Activated CD4-positive, alpha-beta T cell treated with anti-CD3 and anti-CD28 coated beads, Interleukin-2, amount 10 ng/mL, durations not matched to agents 24 days and 14 days (primary cell): ENCODE measurements at regions of chr5 and their contacts with region 1.

Region 1: DNA sequence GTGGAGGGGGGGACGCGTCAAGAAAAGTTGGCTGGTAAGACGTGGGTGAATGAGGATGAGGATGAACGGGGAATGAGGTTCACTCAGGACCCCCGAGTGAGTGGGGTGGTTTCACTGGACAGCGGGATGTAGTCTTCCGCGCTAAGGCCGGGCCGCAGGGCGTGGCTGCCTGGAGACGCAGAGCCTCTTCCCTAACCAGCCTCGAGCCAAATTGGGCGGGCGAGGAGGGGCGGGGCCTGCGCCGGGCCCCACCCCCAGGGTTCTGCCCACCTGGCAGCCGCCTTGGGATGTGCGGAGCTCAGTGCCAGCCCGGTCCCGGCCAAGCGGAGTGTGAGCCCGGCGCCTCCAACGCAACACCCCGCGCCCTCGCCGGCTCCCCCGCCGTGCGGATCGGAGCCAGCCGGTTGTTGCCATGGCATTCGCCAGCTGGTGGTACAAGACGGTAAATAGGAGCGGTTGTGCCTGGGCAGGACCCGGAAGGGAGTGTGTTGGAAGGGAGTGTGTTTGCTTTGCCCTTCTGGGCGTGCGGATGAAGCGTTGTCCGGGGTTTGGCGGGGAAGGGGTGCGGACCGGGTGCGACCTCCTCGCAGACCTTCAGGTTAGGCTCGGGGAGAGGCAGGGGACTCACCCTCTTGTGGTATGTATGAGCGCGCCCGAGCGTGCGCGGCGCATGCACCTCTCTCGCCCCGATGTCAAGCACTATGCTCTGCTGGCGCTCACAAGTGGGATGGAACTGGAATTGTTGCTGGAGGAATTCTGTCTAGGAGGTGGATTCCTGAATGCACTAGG is 743 bp downstream of the CAST start:
- DNase-seq: peak; percentile 96
- H3K4me3 Mint-ChIP-seq: peak overlapping the region; percentile 99
- H3K27ac Mint-ChIP-seq: peak overlapping the region; percentile 99
- H3K4me1 Mint-ChIP-seq: peaks cover 49% of the 10 kb centered on the region
- H3K27me3 Mint-ChIP-seq: peaks cover 12% of the 10 kb centered on the region

Region 2: GRCh38 chr5:96584712-96585111 is 78.2 kb before region 1 on chr5:
- intact Hi-C with region 1: no loop called
- DNase-seq: no peak
- H3K4me3 Mint-ChIP-seq: no peak overlapping the region
- H3K27ac Mint-ChIP-seq: no peak overlapping the region
- H3K4me1 Mint-ChIP-seq: peaks cover 4% of the 10 kb centered on the region
- H3K27me3 Mint-ChIP-seq: peaks cover 33% of the 10 kb centered on the region

Region 3: GRCh38 chr5:96702503-96703383 is 39.8 kb after region 1 on chr5:
- intact Hi-C with region 1: loop called (anchors 1 kb)
- DNase-seq: peak; percentile 92
- H3K4me3 Mint-ChIP-seq: peak overlapping the region; percentile 93
- H3K27ac Mint-ChIP-seq: peak overlapping the region; percentile 88
- H3K4me1 Mint-ChIP-seq: peaks cover 30% of the 10 kb centered on the region
- H3K27me3 Mint-ChIP-seq: no peaks in the 10 kb centered on the region

Region 4: DNA sequence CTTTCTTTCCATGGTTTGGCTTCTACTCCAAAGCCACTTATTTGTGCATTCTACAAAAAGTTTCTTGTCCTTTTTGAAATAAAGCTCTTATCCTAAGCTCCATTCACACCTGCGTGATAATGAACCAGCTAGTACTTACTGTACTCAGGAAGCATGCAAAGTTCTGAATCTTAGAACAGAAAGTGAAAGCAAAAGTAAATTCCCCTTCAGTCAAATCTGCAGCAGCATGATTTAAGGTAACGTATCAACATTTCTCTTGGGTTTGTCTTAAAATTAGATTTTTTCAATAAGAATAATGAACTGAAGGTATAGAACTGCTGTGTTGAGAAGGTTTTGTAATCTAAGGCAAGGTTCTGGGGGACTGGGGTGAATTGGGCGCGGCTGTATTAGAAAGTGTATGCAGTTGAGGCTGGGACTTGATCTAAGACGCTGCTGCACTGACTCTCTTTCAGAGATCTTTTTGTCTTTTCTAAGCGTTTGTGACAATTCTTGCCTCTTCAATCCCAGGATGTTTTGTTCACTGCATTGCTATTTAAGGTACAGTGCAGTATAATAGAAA is 213.5 kb after region 1 on chr5 and contains the start of gene ERAP2:
- intact Hi-C with region 1: loop called (anchors 5 kb)
- DNase-seq: peak; percentile 77
- H3K4me3 Mint-ChIP-seq: peak within 1 kb of the TSS; percentile 96
- H3K27ac Mint-ChIP-seq: peak within 1 kb of the TSS; percentile 98
- H3K4me1 Mint-ChIP-seq: peaks cover 62% of the 10 kb centered on the region
- H3K27me3 Mint-ChIP-seq: no peaks in the 10 kb centered on the region
- total RNA-seq, gene ERAP2: 48.9 and 51.3 TPM in 2 replicates

Region 5: GRCh38 chr5:97183100-97183929 is 520.4 kb after region 1 on chr5 and contains the start of gene RIOK2:
- intact Hi-C with region 1: loop called (anchors 2 kb)
- DNase-seq: peak; percentile 97
- H3K4me3 Mint-ChIP-seq: peak within 1 kb of the TSS; percentile 89
- H3K27ac Mint-ChIP-seq: peak within 1 kb of the TSS; percentile 100
- H3K4me1 Mint-ChIP-seq: peaks cover 24% of the 10 kb centered on the region
- H3K27me3 Mint-ChIP-seq: peaks cover 4% of the 10 kb centered on the region
- total RNA-seq, gene RIOK2: 40.8 and 42.0 TPM in 2 replicates